CD4-positive, alpha-beta memory T cell (primary cell): ENCODE measurements at regions of chr17 and their contacts with region 1.

Region 1: DNA sequence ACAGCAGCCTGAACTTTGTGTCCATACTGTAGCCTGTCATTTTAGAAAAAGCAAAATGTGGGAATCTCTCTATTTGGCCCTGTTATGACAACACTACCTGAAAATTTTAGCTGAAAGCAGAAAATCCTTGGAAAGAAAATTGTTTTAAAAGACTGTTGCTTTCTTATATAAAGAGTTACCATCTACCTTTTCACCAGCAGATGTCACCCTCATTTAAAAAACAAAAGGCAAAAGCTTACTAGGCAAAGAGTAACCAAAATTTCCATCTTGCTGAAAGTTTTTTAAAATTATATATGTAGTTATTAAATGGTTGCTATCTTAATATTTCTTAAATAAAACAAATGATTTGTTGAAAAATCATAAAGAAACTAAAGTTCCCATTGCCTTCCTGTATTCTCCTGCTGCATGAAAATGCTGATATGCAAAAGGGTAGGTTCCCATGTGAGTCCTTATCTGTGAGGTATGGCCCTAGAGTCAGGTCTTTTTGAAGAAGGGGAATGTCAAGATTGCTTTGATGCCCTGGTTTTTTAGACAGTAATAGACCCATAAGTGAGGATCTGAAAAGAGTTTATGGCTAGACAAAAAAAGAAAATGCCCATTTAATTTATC is 61.0 kb downstream of the TNRC6C start:
- DNase-seq: peak in 4 of 5 donors; percentile 26 to 38 (median 29)
- H3K4me3 ChIP-seq: no peak overlapping the region
- H3K4me3 Mint-ChIP-seq: peak overlapping the region in 2 of 8 donors; percentile 21 to 71
- H3K27ac ChIP-seq: peak overlapping the region; percentile 12
- H3K27ac Mint-ChIP-seq: peak overlapping the region in 5 of 7 donors; percentile 25 to 70 (median 33)
- H3K4me1 ChIP-seq: peaks cover 23% of the 10 kb centered on the region
- H3K4me1 Mint-ChIP-seq: peaks cover 20 to 31% (median 24%) of the 10 kb centered on the region in 4 donors
- H3K27me3 ChIP-seq: no peaks in the 10 kb centered on the region
- H3K27me3 Mint-ChIP-seq: no peaks in the 10 kb centered on the region

Region 2: DNA sequence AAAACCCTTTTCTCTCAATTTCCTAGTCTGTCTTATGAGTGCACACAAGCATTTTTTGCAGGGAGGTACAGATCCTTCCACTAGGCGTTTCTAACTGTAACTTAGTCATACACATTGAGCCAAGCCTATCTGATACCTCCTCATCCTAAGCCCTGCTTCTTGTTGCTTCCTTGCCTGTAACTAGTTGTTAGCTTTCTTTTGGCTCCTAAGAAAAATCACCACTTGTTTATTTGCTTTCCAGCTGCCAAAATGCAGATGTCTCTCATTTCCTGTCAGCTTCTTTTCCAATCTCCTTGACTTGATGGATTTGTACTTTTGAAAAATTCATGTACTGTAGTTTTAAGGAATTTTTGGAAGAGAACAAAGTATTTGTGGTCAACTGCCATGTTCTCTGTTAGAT is 12.7 kb after region 1 on chr17:
- CTCF ChIA-PET with region 1: interaction called, 18 read pairs
- POLR2A ChIA-PET with region 1: no interaction called
- intact Hi-C with region 1: no loop called
- DNase-seq: no peak
- H3K4me3 ChIP-seq: no peak overlapping the region
- H3K4me3 Mint-ChIP-seq: no peak overlapping the region
- H3K27ac ChIP-seq: no peak overlapping the region
- H3K27ac Mint-ChIP-seq: peak overlapping the region in 1 of 7 donors; percentile 49
- H3K4me1 ChIP-seq: peaks cover 11% of the 10 kb centered on the region
- H3K4me1 Mint-ChIP-seq: peaks cover 12 to 28% (median 19%) of the 10 kb centered on the region in 4 donors
- H3K27me3 ChIP-seq: no peaks in the 10 kb centered on the region
- H3K27me3 Mint-ChIP-seq: no peaks in the 10 kb centered on the region

Region 3: DNA sequence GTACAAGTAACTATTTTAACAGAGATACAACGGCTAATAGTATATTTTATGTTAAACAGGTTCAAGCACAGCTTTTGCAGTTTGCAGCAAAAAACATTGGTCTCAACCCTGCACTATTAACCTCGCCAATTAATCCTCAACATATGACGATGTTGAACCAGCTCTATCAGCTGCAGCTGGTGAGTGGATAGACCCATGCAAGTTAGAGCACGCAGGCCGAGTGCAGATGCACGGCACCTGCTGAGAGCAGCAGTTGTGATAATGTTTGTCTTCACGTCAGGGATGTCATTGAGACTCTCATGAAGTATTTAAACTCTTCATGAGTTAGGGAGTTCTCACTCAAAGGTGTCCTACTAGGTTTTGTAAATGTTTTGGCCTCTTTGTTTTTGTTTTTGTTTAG is 63.5 kb after region 1 on chr17:
- CTCF ChIA-PET with region 1: interaction called, 11 read pairs
- POLR2A ChIA-PET with region 1: no interaction called
- intact Hi-C with region 1: no loop called
- DNase-seq: no peak
- H3K4me3 ChIP-seq: no peak overlapping the region
- H3K4me3 Mint-ChIP-seq: no peak overlapping the region
- H3K27ac ChIP-seq: no peak overlapping the region
- H3K27ac Mint-ChIP-seq: peak overlapping the region in 1 of 7 donors; percentile 69
- H3K4me1 ChIP-seq: no peaks in the 10 kb centered on the region
- H3K4me1 Mint-ChIP-seq: peaks cover 0 to 2% (median 0%) of the 10 kb centered on the region in 4 donors
- H3K27me3 ChIP-seq: no peaks in the 10 kb centered on the region
- H3K27me3 Mint-ChIP-seq: no peaks in the 10 kb centered on the region